ENCODE measurements at regions of chr5 and their contacts with region 1.

Region 1: DNA sequence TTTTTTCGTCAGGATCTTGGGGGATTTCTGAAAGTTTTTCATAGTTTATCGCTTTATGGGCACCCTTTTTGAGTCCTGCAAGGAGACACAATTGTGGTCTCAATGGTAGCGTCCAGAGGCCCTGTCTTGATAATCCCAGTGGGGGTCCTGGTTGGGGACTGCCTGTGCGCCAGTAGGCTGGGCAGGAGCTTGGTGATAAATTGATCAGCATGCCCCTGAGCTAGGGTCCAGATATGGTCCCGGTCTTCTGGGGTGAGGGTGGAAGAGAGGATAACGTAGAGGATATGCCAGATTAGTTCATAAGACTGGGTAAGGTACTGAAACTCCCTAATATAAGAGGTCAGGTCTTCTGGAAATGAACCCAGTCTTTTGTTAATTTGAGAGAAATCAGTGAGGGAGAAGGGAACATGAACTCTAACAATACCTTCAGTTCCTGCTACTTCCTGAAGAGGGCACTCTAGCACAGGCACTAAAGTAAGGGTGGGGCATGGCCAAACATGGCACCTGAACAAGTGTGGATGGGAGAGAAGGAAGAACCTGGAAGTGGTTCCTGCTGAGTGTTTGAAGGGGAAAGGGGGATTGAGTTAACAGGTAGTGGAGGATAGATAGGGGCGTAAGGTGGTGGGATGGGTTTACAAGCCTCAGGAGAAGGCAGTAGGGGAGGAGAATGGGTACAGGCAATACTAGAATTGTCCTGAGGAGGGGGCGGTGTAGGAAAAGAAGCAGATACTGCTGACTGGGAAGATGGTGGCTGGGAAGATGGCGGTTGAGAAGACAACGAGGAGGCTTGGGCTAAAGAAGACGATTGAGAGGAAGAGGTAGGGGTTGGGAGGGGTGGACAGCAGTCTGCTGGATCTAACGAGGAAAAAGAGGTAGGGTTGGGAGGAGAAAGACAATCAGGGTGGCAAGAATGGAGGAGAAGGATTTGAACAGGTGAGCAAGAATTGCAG is 33.8 kb upstream of the ANXA2R start:
- DNase-seq: peak; percentile 63 to 86 (median 68)
- ATAC-seq: peak; percentile 63
- H3K4me3 ChIP-seq: no peak overlapping the region
- H3K27ac ChIP-seq: peak overlapping the region; percentile 90
- H3K4me1 ChIP-seq: peaks cover 17 to 37% of the 10 kb centered on the region in 2 experiments
- H3K27me3 ChIP-seq: no peaks in the 10 kb centered on the region
- CTCF ChIP-seq: peak; percentile 84 to 93 (median 85)
- EP300 ChIP-seq: no peak
- POLR2A ChIP-seq: peak; percentile 53
- RAD21 ChIP-seq: peak; percentile 95

Region 2: DNA sequence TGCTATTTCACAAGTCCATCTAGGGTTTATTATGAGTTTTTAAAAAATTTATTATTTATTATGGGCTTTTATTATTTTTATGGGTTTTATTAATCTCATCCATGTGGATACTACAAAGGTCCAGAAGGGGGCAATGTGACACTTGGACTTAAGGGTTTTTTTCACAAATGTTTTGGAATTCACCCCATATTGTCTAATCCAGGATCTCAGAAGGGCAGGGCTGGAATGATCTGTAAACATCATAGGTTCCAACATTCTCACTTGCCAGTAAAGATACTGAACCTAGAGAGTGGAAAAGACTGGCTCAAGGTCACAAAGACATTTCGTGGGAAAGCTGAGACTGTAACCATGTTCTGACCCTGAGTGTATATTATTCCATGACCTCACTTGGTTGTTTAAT is 153.8 kb after region 1 on chr5:
- CTCF ChIA-PET with region 1: no interaction called
- POLR2A ChIA-PET with region 1: no interaction called
- in situ Hi-C with region 1: no loop called
- intact Hi-C with region 1: loop called (anchors 5 kb)
- DNase-seq: peak; percentile 41 to 72 (median 49)
- ATAC-seq: peak; percentile 53; the same call in 2 of the 3 replicates
- H3K4me3 ChIP-seq: no peak overlapping the region
- H3K27ac ChIP-seq: no peak overlapping the region
- H3K4me1 ChIP-seq: peaks cover 0 to 16% of the 10 kb centered on the region in 2 experiments; a peak in 3 of 5 replicates
- H3K27me3 ChIP-seq: no peaks in the 10 kb centered on the region
- CTCF ChIP-seq: peak; percentile 54 to 86 (median 57); a peak in 4 of 6 replicates
- EP300 ChIP-seq: no peak
- POLR2A ChIP-seq: no peak
- RAD21 ChIP-seq: peak; percentile 82 to 87

Region 3: DNA sequence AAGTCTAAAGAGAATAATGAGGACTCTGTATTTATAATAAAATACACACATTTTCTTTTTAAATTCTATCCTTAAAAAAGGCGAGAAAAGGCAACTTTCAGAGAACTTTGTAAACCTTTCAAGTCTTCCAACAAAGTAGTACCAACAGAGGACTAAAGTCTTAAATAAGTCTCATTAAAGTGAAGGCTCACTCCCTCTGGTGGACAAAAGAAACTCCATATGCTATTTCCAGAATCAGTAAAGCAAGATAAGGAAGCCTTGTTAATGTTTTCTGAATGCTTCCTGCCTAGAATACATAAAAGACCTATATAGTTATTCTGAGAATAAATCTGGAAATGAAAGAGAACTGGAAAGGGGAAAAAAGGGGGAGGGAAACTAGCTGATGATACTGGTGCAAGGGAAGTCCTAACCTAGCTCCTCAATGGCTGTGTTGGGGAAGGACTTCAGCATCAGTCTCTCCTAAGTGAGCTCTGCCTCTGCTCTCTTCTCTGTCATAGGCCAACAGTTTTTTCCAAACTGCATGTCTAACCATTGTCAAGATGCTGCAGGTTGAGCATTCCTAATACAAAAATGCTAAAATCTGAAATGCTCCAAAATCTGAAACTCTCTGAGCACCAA is 232.2 kb after region 1 on chr5:
- CTCF ChIA-PET with region 1: no interaction called
- POLR2A ChIA-PET with region 1: no interaction called
- in situ Hi-C with region 1: no loop called
- intact Hi-C with region 1: loop called (anchors 5 kb)
- DNase-seq: peak; percentile 41 to 85 (median 44)
- ATAC-seq: peak; percentile 78
- H3K4me3 ChIP-seq: no peak overlapping the region
- H3K27ac ChIP-seq: no peak overlapping the region
- H3K4me1 ChIP-seq: peaks cover 11 to 57% of the 10 kb centered on the region in 2 experiments
- H3K27me3 ChIP-seq: no peaks in the 10 kb centered on the region
- CTCF ChIP-seq: peak; percentile 62 to 83 (median 72); a peak in 5 of 6 replicates
- EP300 ChIP-seq: no peak
- POLR2A ChIP-seq: no peak
- RAD21 ChIP-seq: peak; percentile 83 to 85

Measured in K562 (cell line).